ENCODE measurements at regions of chr22 and their contacts with region 1.

Region 1: GRCh38 chr22:39170825-39171622 is 18.5 kb upstream of the CBX7 start:
- DNase-seq: peak; percentile 76
- H3K4me3 ChIP-seq: no peak overlapping the region
- H3K27ac ChIP-seq: peak overlapping the region; percentile 51
- H3K4me1 ChIP-seq: peaks cover 48% of the 10 kb centered on the region
- H3K27me3 ChIP-seq: no peaks in the 10 kb centered on the region
- CTCF ChIP-seq: peak; percentile 86 to 94
- POLR2A ChIP-seq: no peak

Region 2: GRCh38 chr22:39152511-39153219 is 18.4 kb before region 1 on chr22 and contains the start of gene CBX7:
- CTCF ChIA-PET with region 1: interaction called, 4 read pairs
- POLR2A ChIA-PET with region 1: no interaction called
- dilution Hi-C with region 1: no loop called
- intact Hi-C with region 1: loop called (anchors 1 kb)
- DNase-seq: peak; percentile 79
- H3K4me3 ChIP-seq: peak within 1 kb of the TSS in 2 of 3 experiments; percentile 62 to 67
- H3K27ac ChIP-seq: no peak within 1 kb of the TSS
- H3K4me1 ChIP-seq: no peaks in the 10 kb centered on the region
- H3K27me3 ChIP-seq: peaks cover 24 to 29% of the 10 kb centered on the region in 2 experiments
- CTCF ChIP-seq: no peak
- POLR2A ChIP-seq: no peak
- total RNA-seq, gene CBX7: 5.1 and 7.1 TPM in 2 replicates

Region 3: GRCh38 chr22:39220897-39221850 is 50.1 kb after region 1 on chr22:
- CTCF ChIA-PET with region 1: interaction called, 17 read pairs
- POLR2A ChIA-PET with region 1: no interaction called
- dilution Hi-C with region 1: no loop called
- intact Hi-C with region 1: no loop called
- DNase-seq: no peak
- H3K4me3 ChIP-seq: no peak overlapping the region
- H3K27ac ChIP-seq: no peak overlapping the region
- H3K4me1 ChIP-seq: no peaks in the 10 kb centered on the region
- H3K27me3 ChIP-seq: no peaks in the 10 kb centered on the region
- CTCF ChIP-seq: no peak
- POLR2A ChIP-seq: peak; percentile 38

Region 4: DNA sequence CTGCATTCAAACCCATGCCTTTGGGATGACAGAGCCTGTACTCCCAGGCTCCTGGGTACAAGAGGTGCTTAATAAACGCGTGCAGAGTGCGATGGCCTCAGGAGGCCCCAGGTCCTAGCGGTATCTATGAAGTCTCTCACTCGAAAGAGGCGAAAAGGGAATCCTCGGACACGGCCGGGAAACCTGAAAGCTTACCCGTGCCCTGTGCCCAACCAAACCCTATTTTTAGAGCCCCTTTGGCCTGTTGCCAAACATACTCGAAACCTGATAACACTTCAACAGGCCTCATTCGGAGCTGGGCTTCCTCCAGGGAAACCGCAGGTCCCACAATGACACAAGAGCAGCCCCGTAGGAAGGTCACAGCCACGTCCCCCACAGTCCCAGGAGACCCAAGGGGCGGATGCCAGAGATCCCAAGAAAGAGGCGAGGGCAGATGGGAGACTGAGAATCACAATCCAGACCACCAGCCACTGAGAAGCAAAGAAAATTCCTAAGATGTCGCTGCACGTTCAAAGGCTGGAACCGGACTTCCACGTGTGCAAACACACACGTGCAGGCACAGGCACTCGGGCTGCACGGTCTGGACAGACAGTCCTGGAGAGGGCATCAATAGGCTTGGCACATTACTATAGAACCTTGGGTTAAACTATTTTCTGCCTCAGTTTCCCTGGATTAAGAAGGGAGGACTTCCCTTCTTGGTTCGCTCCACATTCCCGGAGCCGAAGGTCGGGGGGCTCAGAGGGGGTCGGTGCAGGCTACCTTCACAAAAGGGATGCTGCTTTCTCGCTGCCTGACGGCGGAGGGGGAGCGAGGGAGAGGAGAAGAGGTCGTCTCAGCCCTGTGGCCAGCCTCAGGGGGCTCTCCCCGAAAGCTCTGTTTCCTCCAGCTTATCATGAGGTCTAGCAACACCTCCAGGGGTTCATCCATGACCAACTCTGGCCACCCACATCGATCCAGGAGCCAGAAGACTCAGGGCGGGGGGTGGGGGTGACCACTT is 65.6 kb after region 1 on chr22:
- CTCF ChIA-PET with region 1: interaction called, 31 read pairs
- POLR2A ChIA-PET with region 1: interaction called, 6 read pairs
- dilution Hi-C with region 1: no loop called
- intact Hi-C with region 1: loop called (anchors 1 kb)
- DNase-seq: no peak
- H3K4me3 ChIP-seq: no peak overlapping the region
- H3K27ac ChIP-seq: peak overlapping the region; percentile 88
- H3K4me1 ChIP-seq: peaks cover 91% of the 10 kb centered on the region
- H3K27me3 ChIP-seq: no peaks in the 10 kb centered on the region
- CTCF ChIP-seq: no peak
- POLR2A ChIP-seq: peak; percentile 19

Region 5: GRCh38 chr22:39283322-39284004 is 112.4 kb after region 1 on chr22:
- CTCF ChIA-PET with region 1: interaction called, 18 read pairs
- POLR2A ChIA-PET with region 1: interaction called, 4 read pairs
- dilution Hi-C with region 1: no loop called
- intact Hi-C with region 1: loop called (anchors 1 kb)
- DNase-seq: peak; percentile 91
- H3K4me3 ChIP-seq: no peak overlapping the region
- H3K27ac ChIP-seq: peak overlapping the region; percentile 93
- H3K4me1 ChIP-seq: peaks cover 43% of the 10 kb centered on the region
- H3K27me3 ChIP-seq: no peaks in the 10 kb centered on the region
- CTCF ChIP-seq: no peak
- POLR2A ChIP-seq: peak; percentile 53

Region 6: DNA sequence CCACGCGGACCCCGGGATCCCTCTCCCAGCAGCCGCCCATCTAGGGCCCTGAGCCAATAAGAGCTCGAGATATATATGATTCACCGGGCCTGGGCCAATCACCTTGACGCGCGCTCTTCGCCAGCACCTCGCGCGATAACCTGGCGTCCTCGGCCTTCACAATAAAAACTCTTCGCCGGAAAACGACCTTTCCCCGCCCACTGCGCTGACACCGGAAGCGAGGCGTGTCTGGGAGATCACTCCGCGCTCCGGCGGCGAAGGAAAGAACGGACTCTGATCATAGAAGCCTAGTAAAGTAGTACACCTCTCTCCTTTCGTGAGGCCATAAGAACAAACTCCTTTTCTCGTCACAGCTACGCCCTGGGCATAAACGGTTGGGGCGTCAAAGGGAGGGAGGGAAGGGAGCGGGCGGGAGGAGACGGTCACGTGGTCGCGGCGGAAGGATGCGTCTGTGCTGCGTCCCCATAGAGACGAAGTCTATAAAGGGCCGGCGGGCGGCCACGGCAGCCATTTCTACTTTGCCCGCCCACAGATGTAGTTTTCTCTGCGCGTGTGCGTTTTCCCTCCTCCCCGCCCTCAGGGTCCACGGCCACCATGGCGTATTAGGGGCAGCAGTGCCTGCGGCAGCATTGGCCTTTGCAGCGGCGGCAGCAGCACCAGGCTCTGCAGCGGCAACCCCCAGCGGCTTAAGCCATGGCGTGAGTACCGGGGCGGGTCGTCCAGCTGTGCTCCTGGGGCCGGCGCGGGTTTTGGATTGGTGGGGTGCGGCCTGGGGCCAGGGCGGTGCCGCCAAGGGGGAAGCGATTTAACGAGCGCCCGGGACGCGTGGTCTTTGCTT is 349.2 kb after region 1 on chr22 and contains the start of gene ATF4:
- CTCF ChIA-PET with region 1: no interaction called
- POLR2A ChIA-PET with region 1: no interaction called
- dilution Hi-C with region 1: no loop called
- intact Hi-C with region 1: loop called (anchors 10 kb)
- DNase-seq: peak; percentile 98
- H3K4me3 ChIP-seq: peak within 1 kb of the TSS; percentile 59 to 96 (median 92)
- H3K27ac ChIP-seq: peak within 1 kb of the TSS; percentile 93
- H3K4me1 ChIP-seq: peaks cover 15% of the 10 kb centered on the region
- H3K27me3 ChIP-seq: no peaks in the 10 kb centered on the region
- CTCF ChIP-seq: no peak
- POLR2A ChIP-seq: peak; percentile 97
- total RNA-seq, gene ATF4: 312 and 324 TPM in 2 replicates

Region 7: DNA sequence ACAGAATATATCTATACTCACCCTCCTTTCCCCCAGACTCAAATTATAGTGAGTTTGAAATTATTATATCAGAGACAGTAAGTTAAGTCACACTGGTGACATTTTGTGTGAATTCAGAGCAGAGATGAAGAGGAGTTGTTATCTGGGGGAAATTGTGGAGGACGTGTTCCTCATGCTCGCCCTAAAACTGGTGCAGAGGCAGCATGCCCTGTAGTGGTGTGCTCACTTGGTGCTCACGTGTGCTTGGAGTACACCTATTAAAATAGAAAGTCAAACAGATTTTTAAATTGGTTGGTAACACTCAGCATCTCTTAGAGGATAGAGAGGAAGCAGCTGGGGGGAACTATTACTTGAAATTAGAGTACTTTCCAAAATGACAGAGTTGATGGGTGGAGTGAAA is 1123.7 kb after region 1 on chr22:
- CTCF ChIA-PET with region 1: no interaction called
- POLR2A ChIA-PET with region 1: no interaction called
- dilution Hi-C with region 1: no loop called
- intact Hi-C with region 1: no loop called
- DNase-seq: no peak
- H3K4me3 ChIP-seq: no peak overlapping the region
- H3K27ac ChIP-seq: no peak overlapping the region
- H3K4me1 ChIP-seq: peaks cover 5% of the 10 kb centered on the region
- H3K27me3 ChIP-seq: no peaks in the 10 kb centered on the region
- CTCF ChIP-seq: no peak
- POLR2A ChIP-seq: no peak